B cell (primary cell): ENCODE measurements at regions of chr6 and their contacts with region 1.

Region 1: GRCh38 chr6:53171605-53172446 is 23.2 kb upstream of the GCM1 start:
- DNase-seq: peak; percentile 93
- ATAC-seq: peak; percentile 99
- H3K4me3 ChIP-seq: peak overlapping the region in 3 of 5 experiments; percentile 29 to 40 (median 34)
- H3K4me3 Mint-ChIP-seq: peak overlapping the region; percentile 65
- H3K27ac ChIP-seq: peak overlapping the region; percentile 76 to 88
- H3K27ac Mint-ChIP-seq: peak overlapping the region; percentile 81
- H3K4me1 ChIP-seq: peaks cover 28 to 30% of the 10 kb centered on the region in 2 donors
- H3K4me1 Mint-ChIP-seq: peaks cover 24% of the 10 kb centered on the region
- H3K27me3 ChIP-seq: no peaks in the 10 kb centered on the region
- H3K27me3 Mint-ChIP-seq: no peaks in the 10 kb centered on the region
- CTCF ChIP-seq: peak; percentile 100

Region 2: DNA sequence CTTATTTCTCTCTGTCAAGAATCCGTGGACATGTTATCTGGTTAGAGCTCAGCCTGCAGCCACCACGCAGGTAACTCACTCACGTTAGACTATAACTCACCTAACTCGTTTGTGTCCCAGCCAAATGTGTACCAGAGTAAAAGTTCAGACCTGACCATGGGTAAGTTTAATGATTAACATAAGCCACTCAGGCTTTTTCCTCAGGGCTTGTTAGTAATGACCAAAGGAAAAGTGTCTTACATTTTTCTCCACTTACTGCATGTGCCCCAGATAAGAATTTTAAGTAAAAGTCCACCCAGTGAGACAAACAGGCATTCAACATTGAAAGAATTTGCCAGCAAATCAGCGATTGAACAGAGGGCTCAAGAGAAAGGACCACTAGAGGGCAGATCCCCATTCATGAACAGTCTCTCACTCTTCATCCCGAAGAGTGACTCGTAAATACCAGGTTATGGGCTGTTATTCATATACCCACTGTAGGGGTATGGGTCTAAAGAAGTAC is 1084.3 kb before region 1 on chr6 and contains the start of gene PKHD1:
- CTCF ChIA-PET with region 1: no interaction called
- POLR2A ChIA-PET with region 1: no interaction called
- intact Hi-C with region 1: no loop called
- DNase-seq: no peak
- ATAC-seq: no peak
- H3K4me3 ChIP-seq: no peak within 1 kb of the TSS
- H3K4me3 Mint-ChIP-seq: no peak within 1 kb of the TSS
- H3K27ac ChIP-seq: no peak within 1 kb of the TSS
- H3K27ac Mint-ChIP-seq: no peak within 1 kb of the TSS
- H3K4me1 ChIP-seq: no peaks in the 10 kb centered on the region
- H3K4me1 Mint-ChIP-seq: no peaks in the 10 kb centered on the region
- H3K27me3 ChIP-seq: no peaks in the 10 kb centered on the region
- H3K27me3 Mint-ChIP-seq: no peaks in the 10 kb centered on the region
- CTCF ChIP-seq: no peak
- total RNA-seq, gene PKHD1: not detected in 2 replicates

Region 3: DNA sequence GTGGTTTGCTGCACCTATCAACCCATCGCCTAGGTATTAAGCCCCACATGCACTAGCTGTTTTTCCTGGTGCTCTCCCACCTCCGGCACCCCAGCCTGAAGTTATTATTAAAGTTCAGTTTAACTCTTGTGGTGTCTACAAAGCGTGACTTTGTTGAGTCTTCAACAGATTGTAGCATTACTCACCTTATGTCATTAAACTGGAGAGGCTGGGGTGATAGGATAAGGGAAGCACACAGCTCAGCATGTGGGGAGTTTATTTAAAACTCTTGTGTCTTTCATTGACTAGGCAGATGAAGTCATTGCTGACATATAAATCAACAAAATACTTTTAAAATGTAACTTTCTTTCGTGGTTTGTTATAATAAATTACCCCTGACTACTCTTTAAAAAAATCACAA is 61.5 kb after region 1 on chr6:
- CTCF ChIA-PET with region 1: interaction called, 14 read pairs
- POLR2A ChIA-PET with region 1: interaction called, 8 read pairs
- intact Hi-C with region 1: no loop called
- DNase-seq: no peak
- ATAC-seq: no peak
- H3K4me3 ChIP-seq: no peak overlapping the region
- H3K4me3 Mint-ChIP-seq: no peak overlapping the region
- H3K27ac ChIP-seq: peak overlapping the region in 1 of 2 donors; percentile 1
- H3K27ac Mint-ChIP-seq: peak overlapping the region; percentile 47
- H3K4me1 ChIP-seq: peaks cover 69 to 74% of the 10 kb centered on the region in 2 donors
- H3K4me1 Mint-ChIP-seq: peaks cover 76% of the 10 kb centered on the region
- H3K27me3 ChIP-seq: no peaks in the 10 kb centered on the region
- H3K27me3 Mint-ChIP-seq: no peaks in the 10 kb centered on the region
- CTCF ChIP-seq: no peak

Region 4: GRCh38 chr6:53273370-53273769 is 101.5 kb after region 1 on chr6:
- CTCF ChIA-PET with region 1: interaction called, 18 read pairs
- POLR2A ChIA-PET with region 1: no interaction called
- intact Hi-C with region 1: no loop called
- DNase-seq: no peak
- ATAC-seq: no peak
- H3K4me3 ChIP-seq: no peak overlapping the region
- H3K4me3 Mint-ChIP-seq: no peak overlapping the region
- H3K27ac ChIP-seq: peak overlapping the region in 1 of 2 donors; percentile 13
- H3K27ac Mint-ChIP-seq: peak overlapping the region; percentile 2
- H3K4me1 ChIP-seq: peaks cover 2 to 4% of the 10 kb centered on the region in 2 donors
- H3K4me1 Mint-ChIP-seq: peaks cover 38% of the 10 kb centered on the region
- H3K27me3 ChIP-seq: no peaks in the 10 kb centered on the region
- H3K27me3 Mint-ChIP-seq: no peaks in the 10 kb centered on the region
- CTCF ChIP-seq: no peak

Region 5: DNA sequence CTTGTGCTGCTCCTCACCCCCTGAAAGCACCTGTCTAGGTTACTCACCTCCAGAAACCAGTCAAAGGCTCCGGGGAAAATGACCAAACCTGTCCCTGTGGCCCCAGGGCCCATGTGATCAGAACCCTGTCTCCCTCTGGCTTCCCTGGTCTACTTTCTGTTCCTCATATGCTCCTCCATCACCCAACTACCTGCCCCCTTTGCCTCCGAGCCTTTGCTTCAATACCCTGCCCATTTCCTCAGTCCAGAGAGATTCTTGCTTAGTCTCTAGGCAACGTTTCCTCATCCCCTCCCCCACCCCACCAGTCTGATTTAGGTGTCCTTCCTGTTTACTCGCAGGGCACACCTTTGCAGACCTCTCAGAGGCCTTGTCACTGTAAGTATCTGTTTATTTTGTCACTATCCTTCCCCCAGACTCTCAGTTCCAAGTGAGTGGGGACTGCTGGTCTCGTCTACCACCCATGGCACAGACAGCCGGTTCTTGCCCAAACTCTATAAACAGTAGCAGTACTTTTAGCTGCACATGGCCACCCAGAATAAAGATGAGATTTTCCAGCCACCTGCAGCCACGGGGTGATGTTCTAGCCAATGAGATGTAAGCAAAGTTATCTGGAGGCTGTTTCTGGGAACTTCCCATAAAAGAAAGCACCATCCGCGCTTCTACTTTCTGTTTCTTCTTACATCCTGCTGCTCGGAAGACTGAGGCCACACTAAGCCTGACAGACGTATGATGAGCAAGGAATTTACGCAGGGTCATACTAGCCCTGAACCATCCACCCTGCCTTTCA is 163.6 kb after region 1 on chr6:
- CTCF ChIA-PET with region 1: interaction called, 14 read pairs
- POLR2A ChIA-PET with region 1: no interaction called
- intact Hi-C with region 1: no loop called
- DNase-seq: peak; percentile 93
- ATAC-seq: peak; percentile 88
- H3K4me3 ChIP-seq: peak overlapping the region; percentile 38 to 79 (median 58)
- H3K4me3 Mint-ChIP-seq: peak overlapping the region; percentile 80
- H3K27ac ChIP-seq: peak overlapping the region; percentile 98
- H3K27ac Mint-ChIP-seq: peak overlapping the region; percentile 97
- H3K4me1 ChIP-seq: peaks cover 81 to 89% of the 10 kb centered on the region in 2 donors
- H3K4me1 Mint-ChIP-seq: peaks cover 88% of the 10 kb centered on the region
- H3K27me3 ChIP-seq: no peaks in the 10 kb centered on the region
- H3K27me3 Mint-ChIP-seq: no peaks in the 10 kb centered on the region
- CTCF ChIP-seq: no peak

Region 6: GRCh38 chr6:53410508-53411258 is 238.9 kb after region 1 on chr6:
- CTCF ChIA-PET with region 1: interaction called, 147 read pairs
- POLR2A ChIA-PET with region 1: interaction called, 7 read pairs
- intact Hi-C with region 1: loop called (anchors 1 kb)
- DNase-seq: peak; percentile 77
- ATAC-seq: peak; percentile 98
- H3K4me3 ChIP-seq: peak overlapping the region in 2 of 5 experiments; percentile 7 to 39
- H3K4me3 Mint-ChIP-seq: peak overlapping the region; percentile 74
- H3K27ac ChIP-seq: peak overlapping the region; percentile 7 to 46
- H3K27ac Mint-ChIP-seq: peak overlapping the region; percentile 65
- H3K4me1 ChIP-seq: peaks cover 12 to 15% of the 10 kb centered on the region in 2 donors
- H3K4me1 Mint-ChIP-seq: peaks cover 11% of the 10 kb centered on the region
- H3K27me3 ChIP-seq: no peaks in the 10 kb centered on the region
- H3K27me3 Mint-ChIP-seq: no peaks in the 10 kb centered on the region
- CTCF ChIP-seq: peak; percentile 80

Region 7: GRCh38 chr6:53530346-53530745 is 358.5 kb after region 1 on chr6:
- CTCF ChIA-PET with region 1: no interaction called
- POLR2A ChIA-PET with region 1: no interaction called
- intact Hi-C with region 1: no loop called
- DNase-seq: no peak
- ATAC-seq: no peak
- H3K4me3 ChIP-seq: no peak overlapping the region
- H3K4me3 Mint-ChIP-seq: no peak overlapping the region
- H3K27ac ChIP-seq: no peak overlapping the region
- H3K27ac Mint-ChIP-seq: no peak overlapping the region
- H3K4me1 ChIP-seq: peaks cover 7 to 13% of the 10 kb centered on the region in 2 donors
- H3K4me1 Mint-ChIP-seq: peaks cover 32% of the 10 kb centered on the region
- H3K27me3 ChIP-seq: no peaks in the 10 kb centered on the region
- H3K27me3 Mint-ChIP-seq: no peaks in the 10 kb centered on the region
- CTCF ChIP-seq: no peak

Region 8: GRCh38 chr6:53651764-53652401 is 480.1 kb after region 1 on chr6:
- CTCF ChIA-PET with region 1: interaction called, 3 read pairs
- POLR2A ChIA-PET with region 1: no interaction called
- intact Hi-C with region 1: loop called (anchors 5 kb)
- DNase-seq: peak; percentile 87
- ATAC-seq: peak; percentile 83
- H3K4me3 ChIP-seq: peak overlapping the region; percentile 64 to 96 (median 79)
- H3K4me3 Mint-ChIP-seq: peak overlapping the region; percentile 96
- H3K27ac ChIP-seq: peak overlapping the region; percentile 9 to 51
- H3K27ac Mint-ChIP-seq: peak overlapping the region; percentile 90
- H3K4me1 ChIP-seq: peaks cover 20 to 26% of the 10 kb centered on the region in 2 donors
- H3K4me1 Mint-ChIP-seq: peaks cover 20% of the 10 kb centered on the region
- H3K27me3 ChIP-seq: peaks cover 0 to 6% (median 0%) of the 10 kb centered on the region in 4 experiments
- H3K27me3 Mint-ChIP-seq: no peaks in the 10 kb centered on the region
- CTCF ChIP-seq: peak; percentile 24